Head of caudate nucleus (tissue), 42 donors: ENCODE measurements at regions of chr10 and their contacts with region 1.

Region 1: GRCh38 chr10:91298224-91298871 is 77.9 kb downstream of the PCGF5 start:
- DNase-seq: peak; percentile 54 to 91 (median 82)

Region 2: GRCh38 chr10:91389636-91390512 is 91.5 kb after region 1 on chr10:
- intact Hi-C with region 1: loop called (anchors 10 kb)
- DNase-seq: peak in 7 of 42 donors; percentile 22 to 57 (median 30)

Region 3: DNA sequence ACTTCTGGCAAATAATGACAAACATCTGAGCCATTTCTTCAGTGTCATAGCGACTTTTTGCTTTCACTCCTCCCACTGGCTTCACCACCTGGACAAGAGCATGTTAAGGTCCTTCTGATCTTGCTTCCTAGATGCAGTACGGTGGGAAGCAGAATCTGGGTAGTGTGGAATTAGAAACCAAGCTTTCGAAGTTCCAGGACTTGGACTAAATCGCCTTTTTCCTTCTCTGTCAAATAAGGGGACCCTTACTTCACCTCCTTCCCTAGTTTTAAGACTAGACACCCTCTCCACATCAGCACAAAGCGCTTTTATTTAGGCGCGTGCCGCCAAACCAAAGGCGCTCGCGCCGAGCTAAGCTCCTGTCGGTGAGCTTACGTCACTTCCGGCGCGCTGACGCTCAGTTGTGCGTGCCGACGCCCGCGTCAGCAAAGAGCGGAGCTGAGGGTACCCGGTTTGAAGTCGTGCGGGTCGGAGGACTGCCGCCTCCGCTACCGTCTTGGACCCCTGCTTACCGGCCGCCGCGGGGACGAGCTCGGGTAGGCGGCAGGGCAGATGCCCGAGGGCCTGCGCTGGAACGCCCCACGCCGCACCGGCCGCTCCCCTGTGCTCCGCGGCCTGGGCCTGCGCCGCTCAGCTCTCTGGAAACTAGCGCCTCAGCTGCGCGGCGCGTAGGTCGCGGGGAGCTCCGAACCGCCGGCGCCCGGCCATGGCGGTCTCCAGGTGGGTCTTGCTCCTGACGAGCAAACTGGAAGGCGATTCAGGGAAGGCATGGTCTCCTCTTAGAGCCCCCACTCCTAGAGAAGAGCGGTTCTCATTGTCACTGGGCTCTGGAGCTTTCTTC is 625.2 kb after region 1 on chr10 and contains the start of gene BTAF1:
- intact Hi-C with region 1: loop called (anchors 10 kb)
- DNase-seq: peak; percentile 84 to 97 (median 95)